ENCODE measurements at regions of chr3 and their contacts with region 1.

Region 1: GRCh38 chr3:133573054-133573628 is 345 bp upstream of the CDV3 start:
- DNase-seq: peak; percentile 98
- ATAC-seq: peak; percentile 82
- H3K4me3 ChIP-seq: peak overlapping the region; percentile 66
- H3K27ac ChIP-seq: peak overlapping the region; percentile 76
- H3K4me1 ChIP-seq: peaks cover 57% of the 10 kb centered on the region
- H3K27me3 ChIP-seq: no peaks in the 10 kb centered on the region
- CTCF ChIP-seq: no peak

Region 2: DNA sequence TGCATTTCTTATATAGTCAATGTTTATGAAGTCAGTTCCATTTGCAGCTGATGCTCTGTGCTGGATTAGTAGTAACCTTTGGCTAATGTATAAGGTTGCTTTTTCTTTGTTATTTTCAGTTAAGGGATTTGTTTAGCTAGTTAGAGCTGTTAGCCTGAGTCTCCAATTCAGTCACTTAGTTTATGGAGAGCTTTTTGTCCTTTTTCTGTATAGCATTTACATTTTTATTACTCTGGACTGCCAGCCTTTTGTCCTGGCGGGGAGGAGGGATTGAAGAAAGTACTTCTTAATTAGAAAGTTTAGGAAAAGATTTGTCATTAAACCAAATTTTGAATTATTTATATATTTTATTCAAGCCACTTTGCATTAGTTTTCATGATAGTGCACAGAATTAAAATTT is 1103.8 kb before region 1 on chr3:
- CTCF ChIA-PET with region 1: interaction called, 12 read pairs
- POLR2A ChIA-PET with region 1: no interaction called
- intact Hi-C with region 1: no loop called
- DNase-seq: no peak
- ATAC-seq: no peak
- H3K4me3 ChIP-seq: no peak overlapping the region
- H3K27ac ChIP-seq: no peak overlapping the region
- H3K4me1 ChIP-seq: no peaks in the 10 kb centered on the region
- H3K27me3 ChIP-seq: no peaks in the 10 kb centered on the region
- CTCF ChIP-seq: no peak

Region 3: GRCh38 chr3:132722164-132723024 is 850.7 kb before region 1 on chr3 and contains the start of gene NPHP3:
- CTCF ChIA-PET with region 1: no interaction called
- POLR2A ChIA-PET with region 1: no interaction called
- intact Hi-C with region 1: loop called (anchors 5 kb)
- DNase-seq: peak; percentile 79
- ATAC-seq: peak; percentile 85
- H3K4me3 ChIP-seq: peak within 1 kb of the TSS; percentile 89
- H3K27ac ChIP-seq: no peak within 1 kb of the TSS
- H3K4me1 ChIP-seq: peaks cover 15% of the 10 kb centered on the region
- H3K27me3 ChIP-seq: no peaks in the 10 kb centered on the region
- CTCF ChIP-seq: no peak
- total RNA-seq, gene NPHP3: 6.2 and 7.7 TPM in 2 replicates

Region 4: DNA sequence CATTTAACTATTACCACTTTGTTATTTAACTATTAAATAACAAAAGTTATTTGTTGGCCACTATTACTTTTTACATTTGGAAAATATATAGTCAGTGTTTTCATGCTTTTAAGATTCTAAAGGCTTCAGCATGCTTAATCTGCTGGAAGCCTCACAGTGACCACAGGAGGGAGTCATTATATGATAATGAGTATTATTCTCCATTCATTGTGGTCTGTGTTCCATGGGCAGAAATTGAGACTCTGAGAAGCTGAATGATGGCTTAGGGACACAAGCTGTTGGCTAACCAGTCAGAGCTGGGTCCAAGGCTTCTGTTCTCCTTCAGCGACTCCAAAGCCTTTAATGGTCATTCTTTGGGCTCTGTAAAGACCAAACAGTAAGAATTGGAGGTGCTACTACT is 108.6 kb before region 1 on chr3:
- CTCF ChIA-PET with region 1: interaction called, 14 read pairs
- POLR2A ChIA-PET with region 1: no interaction called
- intact Hi-C with region 1: loop called (anchors 1 kb)
- DNase-seq: peak; percentile 62
- ATAC-seq: peak; percentile 87
- H3K4me3 ChIP-seq: no peak overlapping the region
- H3K27ac ChIP-seq: no peak overlapping the region
- H3K4me1 ChIP-seq: peaks cover 6% of the 10 kb centered on the region; the same call in 1 of the 2 replicates
- H3K27me3 ChIP-seq: no peaks in the 10 kb centered on the region
- CTCF ChIP-seq: peak; percentile 56

Region 5: GRCh38 chr3:133488913-133489312 is 84.2 kb before region 1 on chr3:
- CTCF ChIA-PET with region 1: no interaction called
- POLR2A ChIA-PET with region 1: interaction called, 4 read pairs
- intact Hi-C with region 1: loop called (anchors 1 kb)
- DNase-seq: peak; percentile 42
- ATAC-seq: peak; percentile 71
- H3K4me3 ChIP-seq: no peak overlapping the region
- H3K27ac ChIP-seq: peak overlapping the region; percentile 31
- H3K4me1 ChIP-seq: peaks cover 15% of the 10 kb centered on the region
- H3K27me3 ChIP-seq: no peaks in the 10 kb centered on the region
- CTCF ChIP-seq: no peak

Region 6: GRCh38 chr3:133540896-133541674 is 32.1 kb before region 1 on chr3:
- CTCF ChIA-PET with region 1: no interaction called
- POLR2A ChIA-PET with region 1: interaction called, 5 read pairs
- intact Hi-C with region 1: loop called (anchors 2 kb)
- DNase-seq: peak; percentile 79
- ATAC-seq: peak; percentile 79
- H3K4me3 ChIP-seq: no peak overlapping the region
- H3K27ac ChIP-seq: peak overlapping the region; percentile 93
- H3K4me1 ChIP-seq: peaks cover 31% of the 10 kb centered on the region
- H3K27me3 ChIP-seq: no peaks in the 10 kb centered on the region
- CTCF ChIP-seq: no peak

Region 7: DNA sequence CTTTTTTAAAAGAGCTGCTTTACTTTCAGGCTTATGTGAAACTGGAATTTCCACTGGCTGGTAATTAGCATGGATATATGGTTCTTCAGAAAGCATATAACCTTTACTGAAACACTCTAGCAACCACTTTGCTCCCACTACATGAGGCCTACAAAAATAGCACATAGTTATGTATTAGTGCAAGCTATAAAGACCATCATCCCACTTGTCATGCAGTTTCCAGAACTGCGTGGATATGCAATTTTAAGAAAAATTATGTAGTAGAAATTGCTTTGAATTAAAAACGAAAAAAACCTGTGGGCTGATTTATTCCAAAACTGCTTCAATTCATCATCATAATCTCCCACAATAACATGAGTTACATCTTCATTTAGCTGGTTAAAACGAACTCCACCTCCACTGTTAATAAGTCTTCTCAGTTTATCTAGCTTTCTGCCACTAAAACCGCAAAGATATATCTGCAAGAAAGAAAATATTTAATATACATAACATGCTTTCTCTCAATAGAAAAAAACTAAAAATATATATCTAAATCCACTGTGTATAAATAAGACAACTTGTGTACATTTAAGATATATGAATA is 76.4 kb after region 1 on chr3:
- CTCF ChIA-PET with region 1: no interaction called
- POLR2A ChIA-PET with region 1: no interaction called
- intact Hi-C with region 1: no loop called
- DNase-seq: no peak
- ATAC-seq: no peak
- H3K4me3 ChIP-seq: no peak overlapping the region
- H3K27ac ChIP-seq: no peak overlapping the region
- H3K4me1 ChIP-seq: peaks cover 11% of the 10 kb centered on the region
- H3K27me3 ChIP-seq: no peaks in the 10 kb centered on the region
- CTCF ChIP-seq: no peak

Region 8: DNA sequence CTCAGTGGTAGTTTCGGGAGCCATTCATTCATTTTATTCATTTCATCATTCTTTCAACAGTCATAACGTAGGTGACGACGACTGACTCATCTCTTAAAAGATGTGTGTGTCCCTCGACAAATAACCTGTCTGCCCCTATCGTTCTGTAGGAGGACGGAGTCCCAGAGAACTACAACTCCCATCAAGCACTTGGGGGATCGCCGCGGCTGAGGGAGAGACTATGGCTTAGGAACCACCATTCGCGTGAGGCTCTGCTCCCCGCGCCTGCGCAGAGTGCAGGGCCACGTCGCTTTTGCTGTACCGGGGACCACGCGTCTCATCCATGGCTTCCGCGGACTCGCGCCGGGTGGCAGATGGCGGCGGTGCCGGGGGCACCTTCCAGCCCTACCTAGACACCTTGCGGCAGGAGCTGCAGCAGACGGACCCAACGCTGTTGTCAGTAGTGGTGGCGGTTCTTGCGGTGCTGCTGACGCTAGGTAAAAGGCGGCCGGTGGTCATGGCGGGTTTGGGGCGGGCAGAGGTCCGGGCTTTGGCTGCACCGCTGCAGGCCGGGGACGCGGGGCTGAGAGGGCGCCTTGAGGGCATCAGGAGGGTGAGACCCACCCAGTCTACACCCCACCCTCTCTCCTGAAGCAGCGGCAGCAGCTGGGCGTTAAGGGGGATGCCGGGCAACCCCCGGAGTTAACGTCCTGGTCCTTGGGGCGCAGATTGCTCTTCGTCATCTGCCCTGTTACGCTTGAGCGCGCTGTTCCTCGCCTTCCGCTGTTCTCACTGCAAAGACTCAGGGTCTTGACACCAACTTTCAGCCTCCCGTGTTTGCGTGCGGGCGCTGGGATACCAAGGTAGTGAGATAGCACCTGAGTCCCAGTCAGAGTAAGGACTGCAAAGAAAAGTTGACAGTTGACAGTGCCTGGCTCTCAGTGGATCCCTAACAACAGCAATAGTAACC is 232.7 kb after region 1 on chr3 and contains the start of gene SRPRB:
- CTCF ChIA-PET with region 1: no interaction called
- POLR2A ChIA-PET with region 1: no interaction called
- intact Hi-C with region 1: loop called (anchors 5 kb)
- DNase-seq: peak; percentile 93
- ATAC-seq: peak; percentile 98
- H3K4me3 ChIP-seq: peak within 1 kb of the TSS; percentile 93
- H3K27ac ChIP-seq: peak within 1 kb of the TSS; percentile 47
- H3K4me1 ChIP-seq: peaks cover 10% of the 10 kb centered on the region
- H3K27me3 ChIP-seq: no peaks in the 10 kb centered on the region
- CTCF ChIP-seq: no peak
- total RNA-seq, gene SRPRB: 41.1 and 43.4 TPM in 2 replicates

Measured in PC-3 (cell line).